H1 (cell line): ENCODE measurements at regions of chr12 and their contacts with region 1.

Region 1: GRCh38 chr12:128583480-128583879 is 240.3 kb downstream of the SLC15A4 start:
- DNase-seq: peak; percentile 23 to 63
- H3K4me3 ChIP-seq: no peak overlapping the region
- H3K27ac ChIP-seq: no peak overlapping the region
- H3K4me1 ChIP-seq: peaks cover 0 to 6% (median 3%) of the 10 kb centered on the region in 4 experiments; a peak in 2 of 7 replicates
- H3K27me3 ChIP-seq: no peaks in the 10 kb centered on the region; a peak in 1 of 7 replicates
- CTCF ChIP-seq: peak; percentile 54 to 84 (median 76)
- EP300 ChIP-seq: no peak
- POLR2A ChIP-seq: no peak
- RAD21 ChIP-seq: peak; percentile 56 to 68

Region 2: GRCh38 chr12:128594521-128594920 is 11.0 kb after region 1 on chr12:
- CTCF ChIA-PET with region 1: interaction called, 13 read pairs
- POLR2A ChIA-PET with region 1: no interaction called
- DNase-seq: no peak
- H3K4me3 ChIP-seq: no peak overlapping the region
- H3K27ac ChIP-seq: no peak overlapping the region
- H3K4me1 ChIP-seq: peaks cover 0 to 11% (median 5%) of the 10 kb centered on the region in 4 experiments; a peak in 5 of 7 replicates
- H3K27me3 ChIP-seq: peaks cover 0 to 3% (median 1%) of the 10 kb centered on the region in 4 experiments; a peak in 2 of 7 replicates
- CTCF ChIP-seq: no peak
- EP300 ChIP-seq: no peak
- POLR2A ChIP-seq: no peak
- RAD21 ChIP-seq: no peak

Region 3: GRCh38 chr12:128606051-128606450 is 22.6 kb after region 1 on chr12:
- CTCF ChIA-PET with region 1: interaction called, 10 read pairs
- POLR2A ChIA-PET with region 1: no interaction called
- DNase-seq: no peak
- H3K4me3 ChIP-seq: no peak overlapping the region
- H3K27ac ChIP-seq: no peak overlapping the region
- H3K4me1 ChIP-seq: peaks cover 0 to 4% (median 1%) of the 10 kb centered on the region in 4 experiments; a peak in 4 of 7 replicates
- H3K27me3 ChIP-seq: no peaks in the 10 kb centered on the region
- CTCF ChIP-seq: no peak
- EP300 ChIP-seq: no peak
- POLR2A ChIP-seq: no peak
- RAD21 ChIP-seq: no peak